CD14-positive monocyte (primary cell): ENCODE measurements at regions of chr11 and their contacts with region 1.

Region 1: DNA sequence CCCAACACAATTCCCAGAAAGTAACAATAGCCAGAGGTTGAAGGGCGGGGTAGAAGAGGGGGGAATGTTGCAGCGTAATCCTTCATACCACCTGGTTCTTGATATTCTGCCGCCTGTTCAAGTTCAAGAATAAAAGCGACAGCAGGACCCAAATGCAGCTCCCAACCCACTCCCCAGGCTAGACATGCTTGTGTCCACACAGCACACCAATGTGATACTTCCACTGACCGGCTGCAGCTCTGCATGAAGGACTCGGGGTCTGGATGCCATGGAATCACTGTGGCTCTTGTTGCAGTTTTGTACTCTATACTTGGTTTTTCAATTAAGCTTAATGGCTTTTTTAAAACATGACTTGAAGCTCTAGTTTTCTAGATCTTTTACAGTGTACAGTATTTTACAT is 6.5 kb downstream of the SRPRA start:
- DNase-seq: no peak
- H3K4me3 ChIP-seq: no peak overlapping the region
- H3K4me3 Mint-ChIP-seq: no peak overlapping the region
- H3K27ac ChIP-seq: peak overlapping the region in 1 of 2 donors; percentile 9
- H3K27ac Mint-ChIP-seq: no peak overlapping the region
- H3K4me1 ChIP-seq: no peaks in the 10 kb centered on the region
- H3K4me1 Mint-ChIP-seq: peaks cover 5% of the 10 kb centered on the region
- H3K27me3 ChIP-seq: no peaks in the 10 kb centered on the region
- H3K27me3 Mint-ChIP-seq: peaks cover 0 to 1% (median 0%) of the 10 kb centered on the region in 3 donors
- CTCF ChIP-seq: no peak

Region 2: DNA sequence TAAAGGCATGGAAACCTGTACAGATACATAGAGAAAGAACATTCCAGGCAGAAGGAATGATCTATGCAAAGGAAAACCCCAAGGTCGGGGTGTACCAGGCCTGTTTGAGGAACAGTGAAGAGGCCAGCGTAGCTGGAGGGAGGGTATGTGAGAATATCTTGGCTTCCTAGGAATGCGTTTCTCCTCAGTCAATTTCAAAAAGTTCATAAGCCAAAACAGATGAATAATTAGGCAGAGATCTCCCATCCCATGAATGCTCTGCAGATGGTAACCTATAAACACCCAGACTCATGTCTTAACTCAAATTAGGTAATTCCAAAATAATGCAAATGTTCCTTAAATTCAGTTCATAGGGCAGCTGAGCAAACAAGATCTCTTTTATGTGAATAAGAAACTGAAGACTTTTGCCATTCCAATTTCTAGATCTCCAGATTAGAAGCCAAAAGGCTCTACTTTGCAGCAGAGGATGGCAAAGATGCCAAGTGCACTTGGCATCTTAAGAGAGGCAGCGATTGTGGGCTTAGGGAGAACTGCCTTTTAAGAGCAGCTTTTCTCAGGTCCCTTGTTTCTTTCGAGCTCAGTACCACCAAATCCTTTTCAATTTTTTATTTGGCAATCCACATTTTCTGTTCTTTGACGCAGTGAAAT is 37.4 kb before region 1 on chr11:
- intact Hi-C with region 1: loop called in 1 of 2 experiments (anchors 5 kb)
- DNase-seq: no peak
- H3K4me3 ChIP-seq: no peak overlapping the region
- H3K4me3 Mint-ChIP-seq: no peak overlapping the region
- H3K27ac ChIP-seq: no peak overlapping the region
- H3K27ac Mint-ChIP-seq: peak overlapping the region in 5 of 7 donors; percentile 13 to 89 (median 30)
- H3K4me1 ChIP-seq: peaks cover 0 to 4% of the 10 kb centered on the region in 2 donors
- H3K4me1 Mint-ChIP-seq: peaks cover 12% of the 10 kb centered on the region
- H3K27me3 ChIP-seq: no peaks in the 10 kb centered on the region
- H3K27me3 Mint-ChIP-seq: peaks cover 0 to 2% (median 1%) of the 10 kb centered on the region in 3 donors
- CTCF ChIP-seq: no peak